ENCODE measurements at regions of chr2 and their contacts with region 1.

Region 1: DNA sequence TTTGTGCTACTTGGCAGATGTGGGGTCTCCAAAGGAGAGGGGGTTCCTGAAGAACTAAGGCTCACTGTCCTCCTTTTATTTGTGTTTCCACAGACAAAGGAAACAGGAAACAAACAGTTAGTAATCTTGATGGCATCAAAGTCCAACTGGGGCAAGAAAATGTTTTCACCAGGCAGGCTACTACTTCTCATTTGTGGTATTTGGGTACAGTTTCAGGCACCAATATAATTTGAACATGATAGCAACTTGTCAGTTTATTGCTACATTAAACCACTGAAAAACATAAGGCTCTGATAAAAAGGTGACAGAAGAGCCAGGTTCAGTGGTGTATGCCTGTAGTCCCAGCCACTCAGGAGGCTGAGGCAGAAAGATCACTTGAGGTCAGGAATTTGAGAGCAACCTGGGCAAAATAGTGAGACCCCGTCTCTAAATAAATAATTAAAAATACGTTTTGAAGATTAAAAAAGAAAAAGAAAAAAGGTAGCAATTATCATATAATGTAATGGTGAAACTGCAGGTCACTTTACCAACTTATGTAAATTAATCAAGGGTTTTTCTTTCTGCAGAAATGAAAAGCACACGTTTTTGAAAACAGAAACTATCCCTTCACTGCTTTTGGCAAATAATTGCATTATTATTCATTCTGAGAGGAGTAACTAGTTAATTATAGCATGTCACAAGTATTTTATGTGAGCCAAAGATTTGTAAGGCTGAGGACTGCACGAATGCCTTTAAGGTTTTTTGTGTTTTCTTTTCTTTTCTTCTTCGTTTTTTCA is 157.5 kb upstream of the CAVIN2 start:
- DNase-seq: peak; percentile 40
- ATAC-seq: peak; percentile 85
- H3K4me3 ChIP-seq: peak overlapping the region; percentile 39; the same call in 1 of the 2 replicates
- H3K27ac ChIP-seq: peak overlapping the region; percentile 65
- H3K4me1 ChIP-seq: peaks cover 17% of the 10 kb centered on the region
- H3K27me3 ChIP-seq: no peaks in the 10 kb centered on the region
- CTCF ChIP-seq: no peak
- EP300 ChIP-seq: peak; percentile 70 to 83
- POLR2A ChIP-seq: no peak
- RAD21 ChIP-seq: no peak

Region 2: DNA sequence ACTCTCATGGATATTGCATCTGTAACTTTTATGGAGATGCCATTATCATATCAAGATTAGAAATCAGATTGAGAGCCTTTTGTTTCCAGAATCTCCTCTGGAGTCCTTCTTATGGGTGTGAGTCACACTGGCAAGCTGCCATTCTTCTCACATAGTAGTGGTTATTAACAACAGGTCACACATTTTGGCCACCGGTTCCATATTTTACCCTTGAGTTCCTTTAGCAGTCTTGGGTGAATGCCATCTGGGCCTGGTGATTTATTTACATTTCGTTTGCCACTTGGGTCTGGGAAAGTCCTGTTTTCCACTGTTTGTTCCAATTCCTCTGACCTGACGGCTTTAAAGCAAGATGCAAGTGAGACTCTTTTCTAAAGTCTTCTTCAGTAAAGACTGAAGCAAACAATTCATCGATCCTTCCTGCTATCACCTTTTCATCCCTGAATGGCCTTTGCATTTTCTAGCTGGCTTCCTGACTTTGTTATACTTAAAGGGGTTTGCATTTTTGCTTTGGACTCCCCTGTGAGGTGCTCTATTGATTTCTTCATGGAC is 77.0 kb before region 1 on chr2:
- CTCF ChIA-PET with region 1: interaction called, 3 read pairs
- POLR2A ChIA-PET with region 1: interaction called, 3 read pairs
- RAD21 ChIA-PET with region 1: interaction called, 4 read pairs
- SMC1A ChIA-PET with region 1: interaction called, 10 read pairs
- in situ Hi-C with region 1: no loop called
- intact Hi-C with region 1: no loop called
- DNase-seq: no peak
- ATAC-seq: peak; percentile 23; the same call in 1 of the 3 replicates
- H3K4me3 ChIP-seq: no peak overlapping the region
- H3K27ac ChIP-seq: no peak overlapping the region
- H3K4me1 ChIP-seq: peaks cover 23% of the 10 kb centered on the region
- H3K27me3 ChIP-seq: no peaks in the 10 kb centered on the region
- CTCF ChIP-seq: no peak
- EP300 ChIP-seq: no peak
- POLR2A ChIP-seq: no peak
- RAD21 ChIP-seq: no peak

Region 3: GRCh38 chr2:192030289-192030688 is 25.9 kb after region 1 on chr2:
- CTCF ChIA-PET with region 1: interaction called, 3 read pairs
- POLR2A ChIA-PET with region 1: no interaction called
- RAD21 ChIA-PET with region 1: no interaction called
- SMC1A ChIA-PET with region 1: interaction called, 4 read pairs
- in situ Hi-C with region 1: no loop called
- intact Hi-C with region 1: loop called (anchors 2 kb)
- DNase-seq: no peak
- ATAC-seq: peak; percentile 86
- H3K4me3 ChIP-seq: no peak overlapping the region
- H3K27ac ChIP-seq: no peak overlapping the region
- H3K4me1 ChIP-seq: no peaks in the 10 kb centered on the region
- H3K27me3 ChIP-seq: no peaks in the 10 kb centered on the region
- CTCF ChIP-seq: no peak
- EP300 ChIP-seq: no peak
- POLR2A ChIP-seq: no peak
- RAD21 ChIP-seq: no peak